Posterior vena cava (tissue), 2 donors: ENCODE measurements at regions of chr1 and their contacts with region 1.

Region 1: DNA sequence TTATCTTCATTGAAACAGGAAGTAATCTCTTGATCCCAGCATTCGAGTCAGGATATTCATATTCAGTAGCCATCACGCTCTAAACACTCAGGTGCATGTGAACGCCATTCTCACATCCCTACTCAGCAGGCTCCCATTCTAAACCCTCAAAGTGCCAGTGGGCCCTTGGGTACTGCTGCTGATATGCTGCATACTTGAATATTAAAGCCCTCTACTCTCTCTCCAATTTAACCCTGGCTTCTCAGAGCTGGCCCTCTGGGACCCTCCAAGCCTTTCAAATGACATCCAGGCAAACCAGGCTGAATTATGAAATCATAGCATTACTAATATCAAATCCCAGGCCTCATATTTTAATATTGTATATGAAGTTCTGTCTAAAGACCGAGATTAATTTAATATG is 468.2 kb downstream of the NUF2 start:
- DNase-seq: no peak

Region 2: DNA sequence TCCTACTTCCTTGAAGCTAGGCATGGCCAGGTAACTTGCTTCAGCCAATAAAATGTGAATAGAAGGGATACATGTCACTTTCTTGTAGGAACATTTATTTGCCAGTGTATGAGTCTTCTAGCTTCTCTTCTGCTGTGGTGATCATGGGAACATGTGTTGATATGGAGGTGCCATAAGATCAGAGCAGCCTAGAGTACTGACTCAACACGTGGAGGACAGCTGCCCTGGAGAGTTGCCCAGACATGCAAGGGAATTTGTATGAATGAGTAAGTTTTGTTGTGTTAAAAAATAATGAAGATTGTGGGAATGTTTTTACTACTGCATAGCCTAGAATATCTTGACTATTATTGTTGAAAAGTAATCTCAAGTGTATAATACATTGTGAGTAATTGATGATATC is 34.1 kb after region 1 on chr1:
- intact Hi-C with region 1: no loop called
- DNase-seq: peak; percentile 76

Region 3: DNA sequence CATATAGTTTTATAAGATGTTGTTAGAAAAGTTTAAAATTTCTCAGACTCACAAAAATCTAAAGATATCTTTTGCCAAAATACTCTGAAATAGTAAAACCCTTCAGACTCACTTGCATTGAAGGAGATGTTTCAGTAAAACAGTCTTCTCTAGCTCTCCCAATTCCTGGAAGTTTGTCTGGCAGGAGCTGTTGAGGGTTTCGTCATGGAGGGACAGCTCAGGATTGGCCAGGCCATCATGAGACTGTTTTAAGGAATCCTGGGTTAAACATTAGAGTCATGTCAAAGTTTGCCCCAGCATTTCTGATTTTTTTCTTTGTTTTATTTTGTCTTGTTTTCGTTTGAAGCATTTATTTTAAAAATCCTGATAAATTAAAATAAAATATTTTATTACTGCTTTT is 475.3 kb after region 1 on chr1:
- intact Hi-C with region 1: loop called in 1 of 2 experiments (anchors 5 kb)
- DNase-seq: no peak